CD8-positive, alpha-beta T cell (primary cell): ENCODE measurements at regions of chr9 and their contacts with region 1.

Region 1: GRCh38 chr9:131393622-131394463 is at the start of gene PRRC2B:
- DNase-seq: peak; percentile 68 to 93 (median 85)
- ATAC-seq: peak; percentile 49
- H3K4me3 ChIP-seq: peak within 1 kb of the TSS; percentile 57 to 63
- H3K4me3 Mint-ChIP-seq: peak within 1 kb of the TSS; percentile 92
- H3K27ac ChIP-seq: peak within 1 kb of the TSS; percentile 70 to 78
- H3K27ac Mint-ChIP-seq: peak within 1 kb of the TSS; percentile 97
- H3K4me1 ChIP-seq: peaks cover 44% of the 10 kb centered on the region
- H3K4me1 Mint-ChIP-seq: peaks cover 49% of the 10 kb centered on the region
- H3K27me3 ChIP-seq: no peaks in the 10 kb centered on the region
- H3K27me3 Mint-ChIP-seq: no peaks in the 10 kb centered on the region
- CTCF ChIP-seq: peak; percentile 36
- total RNA-seq, gene PRRC2B: 234 to 251 TPM

Region 2: DNA sequence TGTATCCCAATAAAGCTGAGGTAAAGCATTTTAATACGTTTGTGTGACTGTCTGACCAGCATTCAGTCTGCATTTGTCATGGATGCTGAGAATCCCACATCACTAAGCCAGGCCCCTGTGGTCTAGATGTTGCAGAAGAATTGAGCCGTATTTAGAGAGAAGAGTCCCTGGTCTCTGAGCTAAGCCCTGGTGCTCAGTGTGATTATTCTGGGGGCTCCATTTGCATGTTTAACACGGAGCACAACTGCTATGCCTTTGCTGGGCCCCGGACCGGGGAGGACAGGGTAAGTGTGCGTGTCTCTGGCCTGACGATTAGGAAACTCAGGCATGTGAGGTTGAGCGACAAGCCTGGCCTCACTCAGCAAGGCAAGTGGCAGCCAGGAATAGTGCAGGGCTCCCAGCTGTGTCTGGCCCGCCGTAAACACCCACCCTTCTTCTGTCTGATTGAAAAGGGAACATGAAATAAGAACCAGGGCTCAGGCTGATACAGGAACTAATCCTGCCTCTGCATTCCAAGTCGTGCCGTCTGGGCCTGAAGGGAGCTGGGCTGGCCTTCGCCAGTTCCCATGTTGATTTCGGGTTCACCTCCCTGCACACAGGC is 139.9 kb before region 1 on chr9:
- CTCF ChIA-PET with region 1: no interaction called
- POLR2A ChIA-PET with region 1: interaction called, 7 read pairs
- intact Hi-C with region 1: loop called (anchors 5 kb)
- DNase-seq: peak in 2 of 9 experiments; percentile 19 to 28
- ATAC-seq: no peak
- H3K4me3 ChIP-seq: no peak overlapping the region
- H3K4me3 Mint-ChIP-seq: peak overlapping the region; percentile 29
- H3K27ac ChIP-seq: no peak overlapping the region
- H3K27ac Mint-ChIP-seq: peak overlapping the region; percentile 75
- H3K4me1 ChIP-seq: peaks cover 76% of the 10 kb centered on the region
- H3K4me1 Mint-ChIP-seq: peaks cover 62% of the 10 kb centered on the region
- H3K27me3 ChIP-seq: no peaks in the 10 kb centered on the region
- H3K27me3 Mint-ChIP-seq: no peaks in the 10 kb centered on the region
- CTCF ChIP-seq: no peak

Region 3: GRCh38 chr9:131277910-131278701 is 115.7 kb before region 1 on chr9:
- CTCF ChIA-PET with region 1: interaction called, 3 read pairs
- POLR2A ChIA-PET with region 1: interaction called, 4 read pairs
- intact Hi-C with region 1: loop called (anchors 1 to 5 kb)
- DNase-seq: peak; percentile 43 to 89 (median 72)
- ATAC-seq: peak; percentile 51
- H3K4me3 ChIP-seq: peak overlapping the region; percentile 45 to 49
- H3K4me3 Mint-ChIP-seq: peak overlapping the region; percentile 90
- H3K27ac ChIP-seq: peak overlapping the region; percentile 48 to 84
- H3K27ac Mint-ChIP-seq: peak overlapping the region; percentile 90
- H3K4me1 ChIP-seq: peaks cover 26% of the 10 kb centered on the region
- H3K4me1 Mint-ChIP-seq: peaks cover 30% of the 10 kb centered on the region
- H3K27me3 ChIP-seq: peaks cover 0 to 3% of the 10 kb centered on the region in 2 experiments
- H3K27me3 Mint-ChIP-seq: no peaks in the 10 kb centered on the region
- CTCF ChIP-seq: no peak

Region 4: DNA sequence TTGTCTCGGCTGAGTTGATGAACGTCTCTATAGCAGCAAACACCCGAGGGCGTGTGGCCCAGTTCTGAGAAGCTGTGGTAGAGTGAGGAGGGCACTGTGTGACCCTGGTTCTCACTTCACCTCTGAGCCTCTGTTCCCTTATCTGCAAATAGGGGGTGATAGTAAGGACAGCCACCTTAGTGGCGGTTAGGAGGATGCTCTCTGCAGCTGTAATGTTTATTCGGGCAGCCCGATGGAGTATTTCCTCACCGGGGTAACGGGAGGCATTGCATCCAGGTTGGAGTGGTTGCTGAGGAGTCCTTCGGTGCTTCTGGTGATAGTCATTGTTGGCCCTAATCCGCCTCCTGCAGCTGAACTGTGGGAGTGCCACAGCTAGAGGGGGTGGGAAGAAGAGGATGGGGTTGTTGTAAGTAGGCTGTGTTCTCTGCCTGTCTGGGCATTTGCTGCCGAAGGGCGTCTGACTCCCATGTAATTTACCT is 13.9 kb after region 1 on chr9:
- CTCF ChIA-PET with region 1: interaction called, 12 read pairs
- POLR2A ChIA-PET with region 1: interaction called, 33 read pairs
- intact Hi-C with region 1: loop called (anchors 1 kb)
- DNase-seq: peak in 7 of 9 experiments; percentile 28 to 86 (median 66)
- ATAC-seq: peak; percentile 68
- H3K4me3 ChIP-seq: peak overlapping the region; percentile 42 to 47
- H3K4me3 Mint-ChIP-seq: peak overlapping the region; percentile 82
- H3K27ac ChIP-seq: peak overlapping the region; percentile 53 to 78
- H3K27ac Mint-ChIP-seq: peak overlapping the region; percentile 88
- H3K4me1 ChIP-seq: peaks cover 88% of the 10 kb centered on the region
- H3K4me1 Mint-ChIP-seq: peaks cover 90% of the 10 kb centered on the region
- H3K27me3 ChIP-seq: no peaks in the 10 kb centered on the region
- H3K27me3 Mint-ChIP-seq: no peaks in the 10 kb centered on the region
- CTCF ChIP-seq: peak; percentile 63

Region 5: DNA sequence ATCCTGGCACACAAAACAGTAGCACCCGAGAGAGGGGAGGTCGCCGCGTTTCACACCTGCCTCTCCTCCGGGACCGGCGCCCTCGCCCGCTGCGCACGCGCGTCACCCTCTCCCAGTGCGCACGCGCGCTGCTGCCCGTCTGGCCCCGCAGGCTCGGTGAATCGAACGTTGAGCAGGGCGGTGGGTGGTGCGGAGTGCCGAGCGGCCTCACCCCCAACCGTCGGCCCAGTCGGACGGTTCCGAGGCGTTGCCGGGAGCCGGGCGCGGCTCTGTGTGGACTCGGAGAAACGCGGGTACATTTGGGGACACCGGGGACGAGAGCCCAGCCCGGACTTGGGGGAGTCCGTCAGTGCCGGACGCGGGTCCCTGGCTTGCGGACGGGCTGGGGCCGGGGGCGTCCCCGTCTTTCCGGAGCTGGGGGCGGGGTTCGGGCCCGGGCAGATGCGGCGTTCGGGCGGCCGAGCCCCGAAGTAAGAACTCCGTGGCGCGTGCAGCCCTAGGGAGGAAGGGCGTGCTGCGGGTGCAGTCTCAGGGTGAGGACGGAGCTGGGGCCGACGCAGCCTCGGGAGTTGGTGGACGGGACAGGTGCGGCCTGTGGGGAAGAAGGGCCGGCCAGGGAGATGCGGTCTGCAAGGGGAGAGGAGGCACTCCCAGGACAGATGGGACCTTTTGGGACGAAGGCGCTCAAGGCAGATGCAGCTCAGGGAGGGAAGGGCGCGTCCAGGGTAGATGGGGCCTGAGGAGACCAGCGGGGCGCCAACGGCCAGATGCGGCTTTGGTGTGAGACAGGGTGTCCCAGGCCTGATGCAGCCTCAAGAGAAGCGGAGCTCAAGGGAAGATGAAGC is 109.2 kb after region 1 on chr9 and contains the start of gene POMT1:
- CTCF ChIA-PET with region 1: no interaction called
- POLR2A ChIA-PET with region 1: interaction called, 5 read pairs
- intact Hi-C with region 1: loop called in 1 of 2 experiments (anchors 5 kb)
- DNase-seq: peak; percentile 76 to 95 (median 87)
- ATAC-seq: peak; percentile 56
- H3K4me3 ChIP-seq: peak within 1 kb of the TSS; percentile 79 to 83
- H3K4me3 Mint-ChIP-seq: peak within 1 kb of the TSS; percentile 94
- H3K27ac ChIP-seq: peak within 1 kb of the TSS; percentile 45 to 50
- H3K27ac Mint-ChIP-seq: peak within 1 kb of the TSS; percentile 93
- H3K4me1 ChIP-seq: peaks cover 43% of the 10 kb centered on the region
- H3K4me1 Mint-ChIP-seq: peaks cover 62% of the 10 kb centered on the region
- H3K27me3 ChIP-seq: no peaks in the 10 kb centered on the region
- H3K27me3 Mint-ChIP-seq: no peaks in the 10 kb centered on the region
- CTCF ChIP-seq: no peak
- total RNA-seq, gene POMT1: 33.9 to 40.8 TPM

Region 6: GRCh38 chr9:131668439-131669268 is 274.8 kb after region 1 on chr9:
- CTCF ChIA-PET with region 1: no interaction called
- POLR2A ChIA-PET with region 1: no interaction called
- intact Hi-C with region 1: loop called in 1 of 2 experiments (anchors 5 kb)
- DNase-seq: peak; percentile 41 to 88 (median 73)
- ATAC-seq: peak; percentile 74
- H3K4me3 ChIP-seq: peak overlapping the region; percentile 23 to 29
- H3K4me3 Mint-ChIP-seq: peak overlapping the region; percentile 63
- H3K27ac ChIP-seq: peak overlapping the region; percentile 64 to 94
- H3K27ac Mint-ChIP-seq: peak overlapping the region; percentile 99
- H3K4me1 ChIP-seq: peaks cover 73% of the 10 kb centered on the region
- H3K4me1 Mint-ChIP-seq: peaks cover 83% of the 10 kb centered on the region
- H3K27me3 ChIP-seq: no peaks in the 10 kb centered on the region
- H3K27me3 Mint-ChIP-seq: no peaks in the 10 kb centered on the region
- CTCF ChIP-seq: no peak

Region 7: DNA sequence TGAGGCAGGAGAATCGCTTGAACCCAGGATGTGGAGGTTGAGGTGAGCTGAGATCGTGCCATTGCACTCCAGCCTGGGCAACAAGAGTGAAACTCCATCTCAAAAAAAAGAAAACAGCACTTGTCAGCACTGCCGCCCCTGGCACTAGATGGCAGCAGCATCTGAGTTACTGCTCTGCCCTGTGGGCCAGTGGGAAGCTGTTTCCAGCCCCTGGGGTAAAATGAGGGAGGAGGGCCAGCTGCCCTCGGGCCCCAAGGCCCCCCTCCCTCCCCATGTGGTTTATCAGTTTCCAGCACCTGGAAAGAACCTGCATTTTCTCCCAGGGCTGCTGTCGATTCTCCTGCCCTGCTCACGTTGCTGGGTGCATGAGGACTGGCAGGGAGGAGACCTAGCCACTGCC is 1654.7 kb after region 1 on chr9:
- CTCF ChIA-PET with region 1: no interaction called
- POLR2A ChIA-PET with region 1: no interaction called
- intact Hi-C with region 1: no loop called
- DNase-seq: peak in 3 of 9 experiments; percentile 26 to 53 (median 43)
- ATAC-seq: peak; percentile 36
- H3K4me3 ChIP-seq: no peak overlapping the region
- H3K4me3 Mint-ChIP-seq: no peak overlapping the region
- H3K27ac ChIP-seq: no peak overlapping the region
- H3K27ac Mint-ChIP-seq: no peak overlapping the region
- H3K4me1 ChIP-seq: no peaks in the 10 kb centered on the region
- H3K4me1 Mint-ChIP-seq: no peaks in the 10 kb centered on the region
- H3K27me3 ChIP-seq: no peaks in the 10 kb centered on the region
- H3K27me3 Mint-ChIP-seq: no peaks in the 10 kb centered on the region
- CTCF ChIP-seq: no peak